Right ventricle myocardium inferior (tissue), 1 donor: ENCODE measurements at regions of chr2 and their contacts with region 1.

Region 1: GRCh38 chr2:177552422-177553175 is 160.0 kb downstream of the AGPS start:
- DNase-seq: peak; percentile 95
- ATAC-seq: peak; percentile 97

Region 2: GRCh38 chr2:177618255-177619253 is 66.0 kb after region 1 on chr2:
- intact Hi-C with region 1: loop called (anchors 5 kb)
- DNase-seq: peak; percentile 97
- ATAC-seq: peak; percentile 97

Region 3: DNA sequence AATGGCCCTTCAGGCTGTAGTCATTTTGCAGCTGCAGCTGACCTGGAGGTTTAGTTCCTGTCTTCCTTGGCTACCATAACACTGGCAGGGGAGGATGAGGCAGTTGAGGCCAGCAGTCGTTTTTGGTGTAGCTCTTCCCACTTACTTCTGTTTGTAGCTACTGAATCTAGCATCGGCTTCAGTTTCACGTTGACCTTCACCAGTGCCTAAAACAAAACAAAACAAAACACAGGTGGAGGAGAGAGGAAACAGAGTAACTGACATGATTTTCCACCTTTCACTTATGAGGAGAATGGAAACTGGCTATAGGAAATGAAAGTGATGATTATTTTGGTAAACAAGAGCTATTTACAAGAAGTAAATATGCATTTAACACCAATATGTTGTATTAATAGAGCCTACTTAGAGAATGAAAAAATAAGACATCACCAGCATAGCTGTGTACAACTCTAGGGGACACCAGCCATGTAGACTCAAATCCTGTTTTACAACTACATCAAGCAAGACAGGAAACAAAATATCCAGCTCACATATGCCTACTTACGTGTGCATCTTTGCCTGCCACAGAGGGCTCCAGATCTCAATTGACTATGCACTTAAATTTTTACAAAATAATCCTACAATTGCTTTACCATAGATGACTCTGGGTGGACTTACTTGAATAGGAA is 76.9 kb after region 1 on chr2:
- intact Hi-C with region 1: no loop called
- DNase-seq: no peak
- ATAC-seq: no peak